ENCODE measurements at regions of chr17 and their contacts with region 1.

Region 1: DNA sequence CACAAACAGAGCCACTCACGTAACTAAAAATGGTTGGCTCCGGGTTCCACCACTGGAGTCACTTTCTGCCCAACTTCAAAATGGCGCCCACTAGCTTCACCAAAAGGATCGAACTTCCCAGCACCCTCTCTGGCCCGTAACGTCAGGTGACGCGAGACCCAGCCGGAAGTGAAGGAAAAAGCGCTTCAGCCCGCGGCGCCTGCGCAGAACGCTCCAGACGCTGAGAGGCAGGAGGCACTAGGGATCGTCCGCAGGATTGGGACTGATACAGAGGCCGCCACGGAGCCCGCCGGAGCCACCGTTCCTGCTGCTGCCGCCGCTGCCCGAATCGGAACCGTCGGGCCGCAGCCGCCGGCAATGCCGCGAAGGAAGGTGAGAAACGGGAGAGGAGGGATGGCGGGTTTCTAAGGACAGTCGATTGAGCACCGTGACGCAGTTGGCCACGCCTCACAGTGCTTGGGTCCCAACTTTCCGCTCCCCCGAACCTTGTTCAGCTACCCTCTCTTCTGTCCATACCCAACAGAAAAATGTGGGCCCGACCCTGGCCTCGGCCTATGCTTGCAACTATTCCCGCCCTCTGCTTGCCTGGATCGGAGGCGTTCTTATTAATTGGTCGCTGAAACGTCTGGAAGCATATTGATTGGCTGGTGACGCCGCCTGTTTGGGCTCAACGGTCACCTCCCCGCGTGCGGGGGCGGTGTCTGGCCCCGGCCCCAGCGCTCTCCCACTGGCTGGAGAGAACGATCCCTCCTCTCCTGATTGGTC is at the start of gene KAT7:
- DNase-seq: peak; percentile 97 to 99 (median 99)
- H3K4me3 ChIP-seq: peak within 1 kb of the TSS; percentile 93
- H3K4me3 Mint-ChIP-seq: peak within 1 kb of the TSS; percentile 91 to 100 (median 96)
- H3K27ac ChIP-seq: peak within 1 kb of the TSS; percentile 98
- H3K27ac Mint-ChIP-seq: peak within 1 kb of the TSS; percentile 90 to 100 (median 98)
- H3K4me1 ChIP-seq: peaks cover 33% of the 10 kb centered on the region
- H3K4me1 Mint-ChIP-seq: peaks cover 50 to 60% (median 59%) of the 10 kb centered on the region in 3 donors
- H3K27me3 ChIP-seq: no peaks in the 10 kb centered on the region
- H3K27me3 Mint-ChIP-seq: no peaks in the 10 kb centered on the region
- total RNA-seq, gene KAT7: 66.1 to 75.8 TPM

Region 2: DNA sequence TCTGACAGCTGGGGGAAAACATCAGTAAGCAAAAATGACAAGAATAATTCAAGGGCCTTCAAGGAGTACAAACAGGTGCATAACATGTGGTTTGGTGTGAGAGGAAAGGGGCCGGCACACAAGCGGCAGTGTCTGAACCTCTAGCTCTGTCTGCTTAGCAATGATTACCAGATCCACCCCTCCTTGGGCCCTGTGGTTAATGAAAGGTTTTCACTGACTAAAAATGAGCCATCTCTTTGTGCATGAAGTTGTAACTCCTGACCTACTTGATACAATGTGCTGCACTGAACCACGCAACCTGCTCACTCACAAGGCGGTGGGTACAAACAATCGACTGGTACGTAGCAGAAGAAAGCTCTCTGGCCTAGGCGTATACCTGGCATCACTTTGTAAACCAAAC is 39.9 kb before region 1 on chr17:
- CTCF ChIA-PET with region 1: no interaction called
- POLR2A ChIA-PET with region 1: interaction called, 24 read pairs
- DNase-seq: peak; percentile 49 to 80 (median 60)
- H3K4me3 ChIP-seq: peak overlapping the region; percentile 26
- H3K4me3 Mint-ChIP-seq: peak overlapping the region; percentile 73 to 83 (median 82)
- H3K27ac ChIP-seq: peak overlapping the region; percentile 52
- H3K27ac Mint-ChIP-seq: peak overlapping the region; percentile 94 to 99 (median 97)
- H3K4me1 ChIP-seq: peaks cover 90% of the 10 kb centered on the region
- H3K4me1 Mint-ChIP-seq: peaks cover 80 to 93% (median 92%) of the 10 kb centered on the region in 3 donors
- H3K27me3 ChIP-seq: no peaks in the 10 kb centered on the region
- H3K27me3 Mint-ChIP-seq: no peaks in the 10 kb centered on the region

Region 3: DNA sequence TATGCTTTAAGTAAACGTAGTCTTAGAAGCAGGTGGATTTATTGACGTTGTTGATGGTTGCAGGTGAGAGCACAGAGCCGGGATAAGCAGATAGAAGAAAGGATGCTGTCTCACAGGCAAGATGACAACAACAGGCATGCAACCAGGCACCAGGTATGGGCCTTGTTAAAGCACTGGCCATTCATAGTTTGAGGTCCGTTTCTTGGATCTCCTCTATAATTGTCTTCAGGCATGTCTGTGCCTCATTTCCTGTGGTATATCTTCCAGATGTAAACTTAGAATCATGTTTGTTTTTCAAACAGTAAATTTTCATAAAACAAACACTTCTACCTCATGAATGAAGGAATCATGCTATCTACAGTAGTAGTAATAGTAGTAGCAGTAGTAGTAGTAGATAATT is 20.4 kb after region 1 on chr17:
- CTCF ChIA-PET with region 1: no interaction called
- POLR2A ChIA-PET with region 1: no interaction called
- DNase-seq: no peak
- H3K4me3 ChIP-seq: no peak overlapping the region
- H3K4me3 Mint-ChIP-seq: no peak overlapping the region
- H3K27ac ChIP-seq: no peak overlapping the region
- H3K27ac Mint-ChIP-seq: peak overlapping the region in 2 of 8 donors; percentile 20 to 39
- H3K4me1 ChIP-seq: no peaks in the 10 kb centered on the region
- H3K4me1 Mint-ChIP-seq: peaks cover 36 to 52% (median 43%) of the 10 kb centered on the region in 3 donors
- H3K27me3 ChIP-seq: no peaks in the 10 kb centered on the region
- H3K27me3 Mint-ChIP-seq: peaks cover 0 to 2% of the 10 kb centered on the region in 2 donors

Region 4: DNA sequence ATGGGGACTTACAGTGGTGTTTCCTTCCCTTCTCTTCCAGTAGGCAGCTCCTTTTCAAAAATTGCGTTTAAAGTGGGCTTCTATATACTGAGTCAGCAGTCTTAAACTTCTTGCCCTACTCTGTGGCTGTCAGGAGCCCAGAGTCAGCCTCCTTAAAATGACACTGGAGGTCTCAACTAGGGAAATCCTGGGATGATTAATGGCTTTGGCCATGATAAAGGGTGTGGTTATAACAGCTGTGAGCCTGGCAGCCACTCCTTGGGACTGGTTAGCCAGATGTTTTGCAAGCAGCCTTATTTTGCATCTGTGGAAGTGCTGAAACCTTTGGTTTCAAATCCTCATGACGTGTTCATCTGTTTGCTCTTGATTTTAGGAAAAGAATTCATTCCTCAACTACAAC is 34.2 kb after region 1 on chr17:
- CTCF ChIA-PET with region 1: no interaction called
- POLR2A ChIA-PET with region 1: no interaction called
- DNase-seq: no peak
- H3K4me3 ChIP-seq: no peak overlapping the region
- H3K4me3 Mint-ChIP-seq: no peak overlapping the region
- H3K27ac ChIP-seq: no peak overlapping the region
- H3K27ac Mint-ChIP-seq: peak overlapping the region in 3 of 8 donors; percentile 13 to 78 (median 55)
- H3K4me1 ChIP-seq: peaks cover 44% of the 10 kb centered on the region
- H3K4me1 Mint-ChIP-seq: peaks cover 33 to 35% (median 35%) of the 10 kb centered on the region in 3 donors
- H3K27me3 ChIP-seq: no peaks in the 10 kb centered on the region
- H3K27me3 Mint-ChIP-seq: peaks cover 0 to 2% of the 10 kb centered on the region in 2 donors

Measured in CD8-positive, alpha-beta memory T cell (primary cell).